CD14-positive monocyte (primary cell): ENCODE measurements at regions of chr3 and their contacts with region 1.

Region 1: GRCh38 chr3:179322286-179323196 is at the start of gene ZNF639:
- DNase-seq: peak; percentile 67 to 72 (median 71)
- H3K4me3 ChIP-seq: peak within 1 kb of the TSS; percentile 54 to 94 (median 92)
- H3K4me3 Mint-ChIP-seq: peak within 1 kb of the TSS; percentile 86 to 95
- H3K27ac ChIP-seq: peak within 1 kb of the TSS; percentile 75 to 87
- H3K27ac Mint-ChIP-seq: peak within 1 kb of the TSS; percentile 75 to 91 (median 81)
- H3K4me1 ChIP-seq: peaks cover 18 to 35% of the 10 kb centered on the region in 2 donors
- H3K4me1 Mint-ChIP-seq: peaks cover 31% of the 10 kb centered on the region
- H3K27me3 ChIP-seq: no peaks in the 10 kb centered on the region
- H3K27me3 Mint-ChIP-seq: peaks cover 2 to 7% (median 5%) of the 10 kb centered on the region in 3 donors
- CTCF ChIP-seq: peak; percentile 96
- polyA plus RNA-seq, gene ZNF639: 9.4 to 17.9 (median 17.7) TPM

Region 2: GRCh38 chr3:179015551-179016020 is 307.0 kb before region 1 on chr3:
- intact Hi-C with region 1: loop called (anchors 5 to 10 kb)
- DNase-seq: peak; percentile 44 to 68 (median 47)
- H3K4me3 ChIP-seq: no peak overlapping the region
- H3K4me3 Mint-ChIP-seq: no peak overlapping the region
- H3K27ac ChIP-seq: no peak overlapping the region
- H3K27ac Mint-ChIP-seq: no peak overlapping the region
- H3K4me1 ChIP-seq: no peaks in the 10 kb centered on the region
- H3K4me1 Mint-ChIP-seq: peaks cover 9% of the 10 kb centered on the region
- H3K27me3 ChIP-seq: no peaks in the 10 kb centered on the region
- H3K27me3 Mint-ChIP-seq: peaks cover 2 to 4% (median 2%) of the 10 kb centered on the region in 3 donors
- CTCF ChIP-seq: peak; percentile 86

Region 3: GRCh38 chr3:179071550-179072397 is 250.8 kb before region 1 on chr3 and contains the start of gene ZMAT3:
- intact Hi-C with region 1: loop called in 1 of 2 experiments (anchors 10 kb)
- DNase-seq: peak; percentile 73 to 79 (median 75)
- H3K4me3 ChIP-seq: peak within 1 kb of the TSS; percentile 74 to 95 (median 81)
- H3K4me3 Mint-ChIP-seq: peak within 1 kb of the TSS; percentile 95 to 97
- H3K27ac ChIP-seq: peak within 1 kb of the TSS; percentile 48 to 84
- H3K27ac Mint-ChIP-seq: peak within 1 kb of the TSS; percentile 62 to 84 (median 76)
- H3K4me1 ChIP-seq: peaks cover 10 to 16% of the 10 kb centered on the region in 2 donors
- H3K4me1 Mint-ChIP-seq: peaks cover 25% of the 10 kb centered on the region
- H3K27me3 ChIP-seq: no peaks in the 10 kb centered on the region
- H3K27me3 Mint-ChIP-seq: no peaks in the 10 kb centered on the region
- CTCF ChIP-seq: no peak
- polyA plus RNA-seq, gene ZMAT3: 3.9 to 9.9 (median 7.9) TPM